ENCODE measurements at regions of chr14 and their contacts with region 1.

Region 1: GRCh38 chr14:21525962-21526671 is at the start of gene SALL2:
- DNase-seq: peak; percentile 18 to 85 (median 61)
- ATAC-seq: peak; percentile 88
- H3K4me3 ChIP-seq: peak within 1 kb of the TSS; percentile 74
- H3K4me3 Mint-ChIP-seq: peak within 1 kb of the TSS; percentile 96
- H3K27ac ChIP-seq: peak within 1 kb of the TSS in 1 of 2 donors; percentile 7
- H3K27ac Mint-ChIP-seq: peak within 1 kb of the TSS; percentile 55
- H3K4me1 ChIP-seq: peaks cover 13% of the 10 kb centered on the region
- H3K4me1 Mint-ChIP-seq: peaks cover 22% of the 10 kb centered on the region
- H3K27me3 ChIP-seq: no peaks in the 10 kb centered on the region
- H3K27me3 Mint-ChIP-seq: no peaks in the 10 kb centered on the region
- CTCF ChIP-seq: no peak
- total RNA-seq, gene SALL2: 2.8 to 2.9 TPM

Region 2: DNA sequence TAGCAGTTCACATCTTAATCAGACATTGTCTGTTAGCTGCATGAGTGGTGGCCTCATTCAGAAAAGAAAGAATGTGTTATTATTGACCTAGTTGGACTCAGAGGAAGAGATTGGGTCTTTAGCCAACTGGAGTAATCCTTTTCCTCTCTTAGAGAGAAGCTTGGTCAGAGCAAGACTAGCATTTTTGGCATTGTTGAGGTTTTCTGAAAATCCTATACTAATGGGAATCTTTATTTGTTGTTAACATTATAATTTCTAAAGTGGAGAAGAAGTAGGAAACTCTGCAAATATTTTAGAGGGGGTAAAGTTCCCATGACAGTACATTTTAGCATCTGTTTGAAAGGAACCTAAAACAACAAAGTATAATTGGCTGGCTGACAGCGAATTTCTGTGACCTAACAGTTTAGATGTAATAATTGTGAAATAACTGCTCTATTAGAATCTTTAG is 39.5 kb before region 1 on chr14:
- CTCF ChIA-PET with region 1: no interaction called
- POLR2A ChIA-PET with region 1: no interaction called
- intact Hi-C with region 1: no loop called
- DNase-seq: no peak
- ATAC-seq: no peak
- H3K4me3 ChIP-seq: no peak overlapping the region
- H3K4me3 Mint-ChIP-seq: no peak overlapping the region
- H3K27ac ChIP-seq: no peak overlapping the region
- H3K27ac Mint-ChIP-seq: no peak overlapping the region
- H3K4me1 ChIP-seq: peaks cover 5% of the 10 kb centered on the region
- H3K4me1 Mint-ChIP-seq: no peaks in the 10 kb centered on the region
- H3K27me3 ChIP-seq: no peaks in the 10 kb centered on the region
- H3K27me3 Mint-ChIP-seq: no peaks in the 10 kb centered on the region
- CTCF ChIP-seq: no peak

Region 3: GRCh38 chr14:21510735-21511657 is 15.1 kb before region 1 on chr14 and contains the start of gene METTL3:
- CTCF ChIA-PET with region 1: no interaction called
- POLR2A ChIA-PET with region 1: interaction called, 54 read pairs
- intact Hi-C with region 1: loop called (anchors 1 kb)
- DNase-seq: peak; percentile 88 to 98 (median 90)
- ATAC-seq: peak; percentile 99
- H3K4me3 ChIP-seq: peak within 1 kb of the TSS; percentile 83
- H3K4me3 Mint-ChIP-seq: peak within 1 kb of the TSS; percentile 98
- H3K27ac ChIP-seq: peak within 1 kb of the TSS; percentile 82 to 84
- H3K27ac Mint-ChIP-seq: peak within 1 kb of the TSS; percentile 98
- H3K4me1 ChIP-seq: peaks cover 30% of the 10 kb centered on the region
- H3K4me1 Mint-ChIP-seq: peaks cover 45% of the 10 kb centered on the region
- H3K27me3 ChIP-seq: no peaks in the 10 kb centered on the region
- H3K27me3 Mint-ChIP-seq: no peaks in the 10 kb centered on the region
- CTCF ChIP-seq: no peak
- total RNA-seq, gene METTL3: 31.9 to 34.5 TPM